CD14-positive monocyte (primary cell): ENCODE measurements at regions of chr3 and their contacts with region 1.

Region 1: DNA sequence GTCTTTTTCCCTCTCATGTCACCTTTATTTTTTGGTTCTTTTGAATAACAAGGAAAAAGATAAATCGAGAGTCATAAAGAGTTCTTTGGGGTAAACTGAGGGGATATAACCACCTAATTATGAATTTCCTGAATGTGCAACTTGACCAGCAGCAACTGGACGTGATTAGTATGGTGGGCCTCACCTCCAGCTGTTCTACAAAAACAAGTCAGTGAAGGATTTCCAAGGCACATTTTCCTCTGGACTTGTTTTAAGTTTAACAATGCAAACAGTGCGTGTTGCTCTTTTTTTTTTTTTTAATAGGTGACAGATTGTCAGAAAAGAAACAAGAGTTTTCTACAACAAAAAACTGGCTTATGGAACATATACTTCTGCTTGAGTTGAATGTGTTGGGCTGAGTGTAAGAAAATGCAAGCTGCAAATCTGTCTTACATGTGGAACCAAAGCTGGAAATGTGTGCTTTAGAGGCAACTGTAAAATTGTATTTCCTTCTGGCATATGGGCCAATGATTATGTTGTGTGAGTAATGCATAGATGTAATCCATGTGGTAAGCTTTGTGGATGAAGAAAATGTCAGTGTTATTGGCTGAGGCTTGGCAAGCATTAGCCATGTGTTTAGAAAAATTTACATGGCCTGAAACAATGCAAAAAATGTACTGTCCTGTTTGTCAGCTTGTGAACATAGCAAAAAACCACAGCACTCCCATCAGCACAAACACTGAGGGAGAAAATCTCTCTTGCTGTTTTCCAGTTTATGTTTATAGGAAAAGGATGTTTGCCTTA is 44.5 kb upstream of the FNDC3B start:
- DNase-seq: no peak
- H3K4me3 ChIP-seq: no peak overlapping the region
- H3K4me3 Mint-ChIP-seq: no peak overlapping the region
- H3K27ac ChIP-seq: no peak overlapping the region
- H3K27ac Mint-ChIP-seq: no peak overlapping the region
- H3K4me1 ChIP-seq: no peaks in the 10 kb centered on the region
- H3K4me1 Mint-ChIP-seq: peaks cover 7% of the 10 kb centered on the region
- H3K27me3 ChIP-seq: no peaks in the 10 kb centered on the region
- H3K27me3 Mint-ChIP-seq: no peaks in the 10 kb centered on the region
- CTCF ChIP-seq: no peak

Region 2: DNA sequence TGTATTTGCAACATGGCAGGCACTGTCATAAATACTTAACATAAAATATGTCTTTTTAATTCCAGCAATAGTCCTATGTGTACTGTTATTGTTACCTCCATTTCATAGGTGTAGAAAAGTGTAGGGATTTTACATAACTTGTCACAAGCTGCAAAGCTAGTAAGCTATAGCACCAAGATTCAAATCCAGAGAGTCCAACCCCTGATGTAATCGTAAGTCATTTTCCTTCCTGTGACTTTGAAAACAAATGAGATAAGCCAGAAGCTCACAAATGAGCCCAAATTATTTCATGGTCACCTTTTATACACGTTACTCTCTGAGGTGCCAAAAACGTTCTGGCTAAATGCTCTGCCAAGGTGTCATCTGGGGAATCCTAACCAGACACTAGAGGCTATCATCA is 558.5 kb before region 1 on chr3:
- intact Hi-C with region 1: no loop called
- DNase-seq: no peak
- H3K4me3 ChIP-seq: no peak overlapping the region
- H3K4me3 Mint-ChIP-seq: no peak overlapping the region
- H3K27ac ChIP-seq: no peak overlapping the region
- H3K27ac Mint-ChIP-seq: no peak overlapping the region
- H3K4me1 ChIP-seq: no peaks in the 10 kb centered on the region
- H3K4me1 Mint-ChIP-seq: no peaks in the 10 kb centered on the region
- H3K27me3 ChIP-seq: no peaks in the 10 kb centered on the region
- H3K27me3 Mint-ChIP-seq: peaks cover 0 to 2% (median 1%) of the 10 kb centered on the region in 3 donors
- CTCF ChIP-seq: no peak

Region 3: GRCh38 chr3:171944511-171944952 is 50.3 kb before region 1 on chr3:
- intact Hi-C with region 1: loop called in 1 of 2 experiments (anchors 10 kb)
- DNase-seq: no peak
- H3K4me3 ChIP-seq: peak overlapping the region in 2 of 3 experiments; percentile 25 to 48
- H3K4me3 Mint-ChIP-seq: peak overlapping the region; percentile 57 to 76
- H3K27ac ChIP-seq: peak overlapping the region in 1 of 2 donors; percentile 46
- H3K27ac Mint-ChIP-seq: peak overlapping the region in 5 of 7 donors; percentile 42 to 73 (median 66)
- H3K4me1 ChIP-seq: peaks cover 8 to 13% of the 10 kb centered on the region in 2 donors
- H3K4me1 Mint-ChIP-seq: peaks cover 19% of the 10 kb centered on the region
- H3K27me3 ChIP-seq: no peaks in the 10 kb centered on the region
- H3K27me3 Mint-ChIP-seq: no peaks in the 10 kb centered on the region
- CTCF ChIP-seq: no peak